PC-3 (cell line): ENCODE measurements at regions of chr13 and their contacts with region 1.

Region 1: GRCh38 chr13:52809310-52809769 is 39.1 kb downstream of the PCDH8 start:
- DNase-seq: peak; percentile 85
- ATAC-seq: peak; percentile 85
- H3K4me3 ChIP-seq: no peak overlapping the region
- H3K27ac ChIP-seq: peak overlapping the region; percentile 18; the same call in 1 of the 2 replicates
- H3K4me1 ChIP-seq: peaks cover 10% of the 10 kb centered on the region; the same call in 1 of the 2 replicates
- H3K27me3 ChIP-seq: peaks cover 16% of the 10 kb centered on the region; the same call in 1 of the 2 replicates
- CTCF ChIP-seq: peak; percentile 73

Region 2: DNA sequence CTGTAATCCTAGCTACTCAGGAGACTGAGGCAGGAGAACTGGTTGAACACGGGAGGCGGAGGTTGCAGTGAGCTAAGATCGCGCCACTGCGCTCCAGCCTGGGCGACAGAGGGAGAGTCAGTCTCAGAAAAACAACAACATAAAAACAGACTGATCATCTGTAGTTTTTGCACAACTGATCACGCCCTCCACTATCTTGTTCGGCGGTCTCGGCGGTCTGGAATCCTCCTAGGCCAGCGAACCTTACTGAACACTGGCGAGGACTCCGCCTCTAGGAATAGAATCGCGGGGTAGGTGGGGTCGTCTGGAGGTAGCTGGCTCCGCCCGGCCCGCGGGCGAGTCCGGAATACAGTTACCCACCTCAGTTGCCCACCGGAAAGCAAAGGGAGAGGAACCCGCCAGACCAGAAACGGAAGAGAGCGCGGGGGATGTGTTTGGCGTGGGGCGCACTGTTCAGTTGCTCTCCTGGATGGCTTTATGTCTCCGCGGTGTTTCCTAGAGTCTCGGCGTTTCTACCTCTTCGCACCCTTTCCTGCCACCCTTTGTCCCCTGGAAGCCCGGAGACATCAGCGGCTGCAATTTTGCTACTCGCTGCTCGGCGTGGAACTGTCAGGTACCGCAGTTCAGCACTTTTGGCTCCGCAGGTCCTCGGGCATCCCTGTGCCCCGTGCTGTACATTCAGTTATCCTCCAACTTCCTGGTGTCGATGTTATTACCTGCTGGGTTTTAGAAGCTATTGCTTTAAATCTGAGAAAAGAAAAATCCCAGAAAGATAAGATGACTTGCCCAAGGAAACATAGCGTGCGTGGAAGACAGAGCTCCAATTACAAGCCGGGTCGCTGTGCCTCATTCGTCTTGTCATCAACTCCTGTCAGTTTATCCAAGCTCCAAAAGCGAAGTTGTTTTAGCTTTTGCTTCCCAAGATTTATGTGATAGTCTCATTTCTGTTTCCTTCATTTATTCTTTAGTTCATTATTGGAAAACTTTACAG is 192.0 kb before region 1 on chr13:
- CTCF ChIA-PET with region 1: no interaction called
- POLR2A ChIA-PET with region 1: no interaction called
- intact Hi-C with region 1: loop called (anchors 5 kb)
- DNase-seq: peak; percentile 81
- ATAC-seq: peak; percentile 96
- H3K4me3 ChIP-seq: peak overlapping the region; percentile 97
- H3K27ac ChIP-seq: peak overlapping the region; percentile 32; the same call in 1 of the 2 replicates
- H3K4me1 ChIP-seq: no peaks in the 10 kb centered on the region
- H3K27me3 ChIP-seq: no peaks in the 10 kb centered on the region
- CTCF ChIP-seq: no peak

Region 3: GRCh38 chr13:52665325-52665724 is 144.0 kb before region 1 on chr13:
- CTCF ChIA-PET with region 1: interaction called, 13 read pairs
- POLR2A ChIA-PET with region 1: no interaction called
- intact Hi-C with region 1: loop called (anchors 2 kb)
- DNase-seq: peak; percentile 39
- ATAC-seq: no peak
- H3K4me3 ChIP-seq: no peak overlapping the region
- H3K27ac ChIP-seq: no peak overlapping the region
- H3K4me1 ChIP-seq: no peaks in the 10 kb centered on the region
- H3K27me3 ChIP-seq: no peaks in the 10 kb centered on the region
- CTCF ChIP-seq: peak; percentile 58

Region 4: DNA sequence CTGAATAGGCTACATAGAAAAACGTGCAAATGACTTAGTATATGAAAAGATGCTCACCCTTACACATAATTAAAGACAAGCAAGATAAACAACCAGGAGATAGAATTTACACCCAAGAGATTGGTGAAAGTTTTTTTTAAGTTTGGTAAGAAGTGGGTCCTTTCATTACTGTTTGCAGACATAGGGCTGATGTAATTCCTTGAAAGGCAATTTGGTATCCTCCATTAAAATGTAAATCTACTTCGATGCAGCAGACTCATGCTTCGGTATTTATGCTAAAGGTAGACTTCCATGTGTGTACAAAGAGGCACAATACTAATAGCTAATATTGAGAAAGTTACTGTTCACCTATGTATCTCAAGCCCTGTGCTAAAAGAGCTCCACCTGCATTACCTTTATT is 103.3 kb before region 1 on chr13:
- CTCF ChIA-PET with region 1: no interaction called
- POLR2A ChIA-PET with region 1: no interaction called
- intact Hi-C with region 1: loop called (anchors 1 kb)
- DNase-seq: no peak
- ATAC-seq: peak; percentile 49; the same call in 1 of the 2 replicates
- H3K4me3 ChIP-seq: no peak overlapping the region
- H3K27ac ChIP-seq: no peak overlapping the region
- H3K4me1 ChIP-seq: no peaks in the 10 kb centered on the region
- H3K27me3 ChIP-seq: no peaks in the 10 kb centered on the region
- CTCF ChIP-seq: no peak

Region 5: DNA sequence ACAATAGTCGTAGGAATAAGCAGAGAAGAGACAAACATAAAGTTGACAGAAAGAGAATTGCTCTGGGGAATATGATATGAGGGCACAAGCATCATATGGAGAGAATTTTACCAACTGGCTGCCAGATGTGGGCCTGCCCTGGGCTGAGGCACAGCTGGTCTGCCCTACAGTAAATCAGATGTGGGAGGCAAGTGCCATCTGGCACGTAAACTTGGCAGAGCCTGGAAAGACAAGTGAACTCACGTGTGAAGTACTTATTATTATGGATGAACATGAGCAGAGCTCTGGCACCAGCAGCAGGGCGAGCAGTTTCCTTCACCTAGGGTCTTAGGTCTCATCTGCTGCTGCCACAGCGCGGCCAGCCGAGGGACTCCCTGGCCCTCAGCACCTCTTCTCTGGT is 18.5 kb after region 1 on chr13:
- CTCF ChIA-PET with region 1: no interaction called
- POLR2A ChIA-PET with region 1: no interaction called
- intact Hi-C with region 1: no loop called
- DNase-seq: no peak
- ATAC-seq: no peak
- H3K4me3 ChIP-seq: no peak overlapping the region
- H3K27ac ChIP-seq: no peak overlapping the region
- H3K4me1 ChIP-seq: no peaks in the 10 kb centered on the region
- H3K27me3 ChIP-seq: peaks cover 22% of the 10 kb centered on the region
- CTCF ChIP-seq: no peak